Activated B cell treated with CpG ODN at 0.5 μM for 24 hours (primary cell): ENCODE measurements at regions of chr12 and their contacts with region 1.

Region 1: GRCh38 chr12:9797722-9798619 is 29.3 kb upstream of the KLRF1 start:
- DNase-seq: no peak
- ATAC-seq: peak; percentile 96
- H3K4me3 Mint-ChIP-seq: no peak overlapping the region
- H3K27ac Mint-ChIP-seq: no peak overlapping the region
- H3K4me1 Mint-ChIP-seq: peaks cover 34% of the 10 kb centered on the region
- H3K27me3 Mint-ChIP-seq: no peaks in the 10 kb centered on the region
- CTCF ChIP-seq: no peak

Region 2: DNA sequence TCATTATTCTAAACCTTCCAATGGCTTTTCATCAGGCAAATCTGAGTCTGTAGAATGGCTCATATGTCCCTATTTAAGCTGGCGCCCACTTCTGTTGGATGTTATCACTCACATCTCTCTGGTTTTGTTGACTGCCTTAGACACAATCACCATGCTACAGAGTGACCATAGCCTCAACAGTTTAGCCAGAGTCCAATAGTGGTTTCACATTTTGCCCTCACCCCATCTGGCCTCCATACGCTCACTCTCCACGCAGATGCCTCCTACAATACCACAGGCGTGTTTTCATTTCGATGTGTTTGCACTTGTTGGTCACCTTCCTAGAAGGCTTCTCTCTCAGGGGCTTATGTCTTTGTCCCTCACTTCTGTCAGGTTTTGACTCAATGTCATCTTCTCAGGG is 193.7 kb before region 1 on chr12:
- CTCF ChIA-PET with region 1: no interaction called
- POLR2A ChIA-PET with region 1: no interaction called
- intact Hi-C with region 1: no loop called
- DNase-seq: no peak
- ATAC-seq: no peak
- H3K4me3 Mint-ChIP-seq: no peak overlapping the region
- H3K27ac Mint-ChIP-seq: no peak overlapping the region
- H3K4me1 Mint-ChIP-seq: no peaks in the 10 kb centered on the region
- H3K27me3 Mint-ChIP-seq: no peaks in the 10 kb centered on the region
- CTCF ChIP-seq: no peak

Region 3: GRCh38 chr12:9760699-9761418 is 37.1 kb before region 1 on chr12 and contains the start of gene CD69:
- CTCF ChIA-PET with region 1: interaction called, 451 read pairs
- POLR2A ChIA-PET with region 1: interaction called, 16 read pairs
- intact Hi-C with region 1: no loop called
- DNase-seq: peak; percentile 33
- ATAC-seq: peak; percentile 54
- H3K4me3 Mint-ChIP-seq: peak within 1 kb of the TSS; percentile 90
- H3K27ac Mint-ChIP-seq: peak within 1 kb of the TSS; percentile 93
- H3K4me1 Mint-ChIP-seq: peaks cover 81% of the 10 kb centered on the region
- H3K27me3 Mint-ChIP-seq: no peaks in the 10 kb centered on the region
- CTCF ChIP-seq: no peak
- total RNA-seq, gene CD69: 23.7 and 26.7 TPM in 2 replicates

Region 4: DNA sequence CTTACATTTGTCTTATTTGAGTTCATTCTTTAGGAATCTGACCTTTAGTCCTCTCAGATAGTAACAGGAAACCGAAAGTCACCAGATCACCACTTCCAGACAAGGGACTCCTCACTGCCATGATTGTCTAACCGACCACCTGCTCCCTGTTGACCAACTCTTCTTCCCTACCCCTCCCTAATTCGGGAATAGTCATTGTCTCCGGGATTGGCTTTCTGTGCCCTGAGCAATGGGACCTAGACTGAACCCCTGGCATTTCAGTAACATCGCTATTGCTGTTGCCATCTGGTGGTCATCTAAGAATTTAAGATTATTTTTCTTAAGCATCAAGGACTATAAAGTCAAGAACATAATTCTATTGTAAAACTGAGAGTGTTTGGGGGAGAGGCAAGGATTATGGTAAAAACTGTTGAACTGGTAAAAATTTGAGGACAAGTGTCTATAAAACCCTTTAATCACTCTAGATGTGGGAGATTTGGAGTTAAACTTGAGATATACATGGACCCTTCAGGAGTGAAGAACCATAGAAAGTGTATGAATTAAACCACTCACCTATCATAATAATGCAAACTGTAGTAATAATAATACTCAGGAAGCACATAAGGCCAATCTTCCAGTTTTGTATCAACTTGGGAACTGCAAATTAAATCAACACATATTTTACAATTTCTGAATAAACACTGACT is 127.9 kb after region 1 on chr12:
- CTCF ChIA-PET with region 1: interaction called, 3 read pairs
- POLR2A ChIA-PET with region 1: no interaction called
- intact Hi-C with region 1: loop called (anchors 5 kb)
- DNase-seq: no peak
- ATAC-seq: peak; percentile 40
- H3K4me3 Mint-ChIP-seq: peak overlapping the region; percentile 62
- H3K27ac Mint-ChIP-seq: no peak overlapping the region
- H3K4me1 Mint-ChIP-seq: peaks cover 4% of the 10 kb centered on the region
- H3K27me3 Mint-ChIP-seq: peaks cover 12% of the 10 kb centered on the region
- CTCF ChIP-seq: no peak